ENCODE measurements at regions of chr11 and their contacts with region 1.

Region 1: GRCh38 chr11:47819743-47820142 is 28.4 kb downstream of the NUP160 start:
- DNase-seq: no peak
- ATAC-seq: no peak
- H3K4me3 ChIP-seq: no peak overlapping the region
- H3K4me3 Mint-ChIP-seq: no peak overlapping the region
- H3K27ac ChIP-seq: no peak overlapping the region
- H3K27ac Mint-ChIP-seq: no peak overlapping the region
- H3K4me1 ChIP-seq: no peaks in the 10 kb centered on the region
- H3K4me1 Mint-ChIP-seq: no peaks in the 10 kb centered on the region
- H3K27me3 ChIP-seq: no peaks in the 10 kb centered on the region
- H3K27me3 Mint-ChIP-seq: no peaks in the 10 kb centered on the region
- CTCF ChIP-seq: no peak

Region 2: GRCh38 chr11:46760429-46761128 is 1059.2 kb before region 1 on chr11:
- CTCF ChIA-PET with region 1: no interaction called
- POLR2A ChIA-PET with region 1: no interaction called
- intact Hi-C with region 1: loop called in 1 of 2 experiments (anchors 10 kb)
- DNase-seq: no peak
- ATAC-seq: no peak
- H3K4me3 ChIP-seq: no peak overlapping the region
- H3K4me3 Mint-ChIP-seq: no peak overlapping the region
- H3K27ac ChIP-seq: no peak overlapping the region
- H3K27ac Mint-ChIP-seq: no peak overlapping the region
- H3K4me1 ChIP-seq: no peaks in the 10 kb centered on the region
- H3K4me1 Mint-ChIP-seq: no peaks in the 10 kb centered on the region
- H3K27me3 ChIP-seq: no peaks in the 10 kb centered on the region
- H3K27me3 Mint-ChIP-seq: no peaks in the 10 kb centered on the region
- CTCF ChIP-seq: no peak

Region 3: GRCh38 chr11:46948378-46949131 is 871.2 kb before region 1 on chr11:
- CTCF ChIA-PET with region 1: no interaction called
- POLR2A ChIA-PET with region 1: no interaction called
- intact Hi-C with region 1: no loop called
- DNase-seq: no peak
- ATAC-seq: no peak
- H3K4me3 ChIP-seq: no peak overlapping the region
- H3K4me3 Mint-ChIP-seq: no peak overlapping the region
- H3K27ac ChIP-seq: no peak overlapping the region
- H3K27ac Mint-ChIP-seq: no peak overlapping the region
- H3K4me1 ChIP-seq: no peaks in the 10 kb centered on the region
- H3K4me1 Mint-ChIP-seq: peaks cover 7% of the 10 kb centered on the region
- H3K27me3 ChIP-seq: no peaks in the 10 kb centered on the region
- H3K27me3 Mint-ChIP-seq: no peaks in the 10 kb centered on the region
- CTCF ChIP-seq: no peak

Region 4: GRCh38 chr11:47225552-47226400 is 594.0 kb before region 1 on chr11:
- CTCF ChIA-PET with region 1: no interaction called
- POLR2A ChIA-PET with region 1: no interaction called
- intact Hi-C with region 1: no loop called
- DNase-seq: no peak
- ATAC-seq: no peak
- H3K4me3 ChIP-seq: no peak overlapping the region
- H3K4me3 Mint-ChIP-seq: no peak overlapping the region
- H3K27ac ChIP-seq: no peak overlapping the region
- H3K27ac Mint-ChIP-seq: peak overlapping the region; percentile 14
- H3K4me1 ChIP-seq: no peaks in the 10 kb centered on the region
- H3K4me1 Mint-ChIP-seq: peaks cover 3% of the 10 kb centered on the region
- H3K27me3 ChIP-seq: no peaks in the 10 kb centered on the region
- H3K27me3 Mint-ChIP-seq: no peaks in the 10 kb centered on the region
- CTCF ChIP-seq: no peak

Region 5: DNA sequence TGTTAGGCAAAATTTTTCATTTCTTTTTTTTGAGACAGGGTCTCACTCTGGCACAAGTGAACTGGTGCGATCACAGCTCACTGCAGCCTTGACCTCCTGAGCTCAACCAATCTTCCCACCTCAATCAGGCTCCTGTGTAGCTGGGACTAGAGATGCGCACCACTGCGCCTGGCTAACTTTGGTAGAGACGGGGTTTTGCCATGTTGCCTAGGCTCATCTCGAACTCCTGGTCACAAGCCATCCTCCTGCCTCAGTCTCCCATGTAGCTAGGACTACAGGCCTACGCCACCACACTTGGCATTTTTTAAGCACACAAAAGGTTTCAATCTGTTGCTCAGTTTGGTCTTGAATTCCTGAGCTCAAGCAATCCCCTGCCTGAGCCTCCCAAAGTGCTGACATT is 61.7 kb before region 1 on chr11:
- CTCF ChIA-PET with region 1: no interaction called
- POLR2A ChIA-PET with region 1: no interaction called
- intact Hi-C with region 1: no loop called
- DNase-seq: peak in 1 of 9 experiments; percentile 27
- ATAC-seq: no peak
- H3K4me3 ChIP-seq: no peak overlapping the region
- H3K4me3 Mint-ChIP-seq: no peak overlapping the region
- H3K27ac ChIP-seq: no peak overlapping the region
- H3K27ac Mint-ChIP-seq: peak overlapping the region; percentile 60
- H3K4me1 ChIP-seq: no peaks in the 10 kb centered on the region
- H3K4me1 Mint-ChIP-seq: peaks cover 19% of the 10 kb centered on the region
- H3K27me3 ChIP-seq: no peaks in the 10 kb centered on the region
- H3K27me3 Mint-ChIP-seq: no peaks in the 10 kb centered on the region
- CTCF ChIP-seq: no peak